ENCODE measurements at regions of chr13 and their contacts with region 1.

Region 1: DNA sequence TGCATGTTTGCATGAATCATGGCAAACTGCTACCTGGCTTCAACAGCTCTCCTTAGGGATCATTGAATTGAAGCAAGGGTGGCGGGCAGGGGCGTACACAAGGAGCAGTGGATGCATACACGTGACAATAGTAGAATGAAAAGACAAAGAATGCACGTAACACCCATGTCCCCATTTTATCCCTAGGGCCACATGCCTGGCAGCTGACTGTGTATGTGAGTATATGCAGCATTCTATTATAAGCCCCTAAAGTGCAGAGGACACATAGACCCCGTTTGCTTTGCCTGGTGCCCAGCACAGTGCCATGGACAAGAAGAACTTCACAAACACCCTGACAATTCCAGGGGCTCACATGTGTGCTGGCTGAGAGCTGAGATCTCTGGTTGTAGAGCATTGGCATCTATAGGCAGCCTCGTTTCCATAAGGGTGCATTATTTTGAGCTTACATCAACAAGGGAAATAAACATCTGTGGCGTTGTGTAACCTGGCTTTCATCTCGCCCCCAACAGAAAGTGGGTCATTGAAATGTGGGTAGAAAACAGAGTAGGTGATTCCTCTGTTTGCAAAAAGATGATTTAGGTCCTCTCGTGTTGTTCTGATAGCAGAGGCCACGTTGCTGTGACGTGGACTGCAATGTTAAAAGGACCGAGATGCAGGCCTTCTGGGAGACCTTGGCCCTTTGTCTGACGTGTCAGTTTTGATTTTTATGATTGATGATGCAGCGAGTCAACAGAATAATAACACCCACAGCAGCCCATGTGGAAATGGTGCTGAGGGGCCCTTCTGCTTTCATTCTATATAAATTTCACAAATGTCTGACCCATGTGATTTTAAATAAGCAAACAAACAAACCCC is 68.7 kb downstream of the FGF9 start:
- DNase-seq: no peak
- H3K4me3 ChIP-seq: no peak overlapping the region
- H3K4me3 Mint-ChIP-seq: no peak overlapping the region
- H3K27ac Mint-ChIP-seq: no peak overlapping the region
- H3K4me1 ChIP-seq: peaks cover 32% of the 10 kb centered on the region
- H3K4me1 Mint-ChIP-seq: no peaks in the 10 kb centered on the region
- H3K27me3 ChIP-seq: no peaks in the 10 kb centered on the region
- H3K27me3 Mint-ChIP-seq: no peaks in the 10 kb centered on the region
- CTCF ChIP-seq: no peak

Region 2: DNA sequence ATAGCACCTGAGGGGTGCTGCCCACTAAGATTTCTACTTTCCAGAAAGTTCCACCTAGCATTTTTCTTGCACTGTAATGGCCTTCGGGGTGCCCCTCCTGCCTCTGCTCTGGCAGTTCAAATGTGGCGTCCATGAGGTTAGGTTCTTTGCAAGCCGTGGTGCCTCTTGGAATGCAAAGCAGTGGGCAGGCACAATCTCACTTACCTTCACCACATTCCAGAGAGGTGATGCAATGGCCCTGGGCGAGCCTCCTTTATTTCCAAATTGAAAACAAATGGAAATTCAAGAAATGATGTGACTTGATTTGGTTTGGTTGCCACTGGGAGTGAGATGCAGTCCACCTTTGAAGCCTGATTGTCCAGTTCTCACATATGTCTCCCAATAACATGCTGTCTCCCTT is 21.7 kb before region 1 on chr13:
- CTCF ChIA-PET with region 1: no interaction called
- POLR2A ChIA-PET with region 1: no interaction called
- intact Hi-C with region 1: loop called (anchors 2 kb)
- DNase-seq: peak in 1 of 2 experiments; percentile 15
- H3K4me3 ChIP-seq: no peak overlapping the region
- H3K4me3 Mint-ChIP-seq: no peak overlapping the region
- H3K27ac Mint-ChIP-seq: peak overlapping the region; percentile 24
- H3K4me1 ChIP-seq: peaks cover 14% of the 10 kb centered on the region
- H3K4me1 Mint-ChIP-seq: peaks cover 22% of the 10 kb centered on the region
- H3K27me3 ChIP-seq: no peaks in the 10 kb centered on the region
- H3K27me3 Mint-ChIP-seq: no peaks in the 10 kb centered on the region
- CTCF ChIP-seq: no peak

Region 3: DNA sequence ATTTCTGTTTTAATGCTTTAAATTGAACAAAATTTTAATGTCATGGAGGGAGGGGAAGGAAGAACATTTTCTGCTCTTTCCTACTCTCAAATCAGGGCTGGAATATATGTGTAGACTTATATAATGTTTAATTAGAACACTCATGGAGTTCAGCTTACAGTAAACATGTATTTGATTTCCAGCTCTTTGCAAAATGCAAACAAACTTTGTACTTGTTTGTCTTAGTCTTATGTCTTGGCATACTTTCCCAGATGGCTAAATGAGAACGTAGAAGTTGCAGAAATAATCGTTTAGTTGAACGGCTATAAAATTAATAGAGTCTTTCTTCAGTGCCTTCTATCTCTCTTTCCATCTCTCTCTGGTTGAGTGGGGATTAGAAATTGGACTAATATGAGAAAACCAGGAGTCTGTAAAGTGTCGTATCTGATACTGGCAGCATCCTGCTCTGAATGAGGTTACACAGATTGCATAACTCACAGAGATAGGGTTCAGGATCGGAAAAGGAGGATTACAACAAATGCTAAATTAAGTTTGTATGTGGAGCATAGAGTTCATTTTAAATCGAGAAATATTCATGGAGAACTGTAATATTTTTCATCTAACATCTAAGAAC is 13.7 kb after region 1 on chr13:
- CTCF ChIA-PET with region 1: no interaction called
- POLR2A ChIA-PET with region 1: no interaction called
- intact Hi-C with region 1: loop called (anchors 1 kb)
- DNase-seq: no peak
- H3K4me3 ChIP-seq: no peak overlapping the region
- H3K4me3 Mint-ChIP-seq: no peak overlapping the region
- H3K27ac Mint-ChIP-seq: peak overlapping the region; percentile 39
- H3K4me1 ChIP-seq: peaks cover 34% of the 10 kb centered on the region
- H3K4me1 Mint-ChIP-seq: peaks cover 57% of the 10 kb centered on the region
- H3K27me3 ChIP-seq: no peaks in the 10 kb centered on the region
- H3K27me3 Mint-ChIP-seq: no peaks in the 10 kb centered on the region
- CTCF ChIP-seq: no peak

Region 4: DNA sequence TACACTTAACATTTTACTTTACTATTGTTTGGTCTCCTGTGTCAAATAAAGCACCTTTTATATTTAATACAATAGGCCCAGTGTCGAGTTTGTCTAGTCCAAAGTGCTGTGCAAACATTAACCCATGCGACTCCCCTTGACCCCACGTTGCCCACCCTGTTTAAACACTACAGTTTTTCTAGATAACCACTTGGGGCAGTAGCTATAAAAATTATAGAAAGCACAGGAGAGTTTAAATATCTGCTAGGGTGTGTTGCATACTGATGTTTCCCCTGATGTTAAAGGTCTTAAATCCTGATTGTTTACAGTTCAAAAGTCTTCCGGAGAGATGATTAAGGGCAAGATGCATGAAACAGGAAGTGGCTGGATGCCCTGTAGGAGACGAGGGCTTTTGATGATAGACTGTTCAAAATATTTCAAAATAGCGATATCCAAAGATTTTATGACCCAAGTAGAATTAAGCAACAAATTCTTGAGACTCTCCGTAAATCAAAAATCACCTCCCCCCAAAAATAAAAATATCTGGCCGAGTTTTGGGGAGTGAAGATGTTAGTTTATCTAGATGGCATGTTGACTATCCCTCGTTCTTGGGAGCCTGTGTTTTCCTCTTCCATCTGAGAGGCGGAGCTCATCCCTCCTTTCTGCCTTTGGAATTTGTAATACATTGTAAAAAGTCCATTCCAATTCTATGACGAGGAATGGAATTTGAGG is 98.5 kb after region 1 on chr13:
- CTCF ChIA-PET with region 1: no interaction called
- POLR2A ChIA-PET with region 1: no interaction called
- intact Hi-C with region 1: loop called (anchors 2 kb)
- DNase-seq: peak in 1 of 2 experiments; percentile 25
- H3K4me3 ChIP-seq: 0 out of 2 replicates have a peak overlapping the region, but pooled peaks have one; percentile 8
- H3K4me3 Mint-ChIP-seq: peak overlapping the region; percentile 87
- H3K27ac Mint-ChIP-seq: peak overlapping the region; percentile 96
- H3K4me1 ChIP-seq: peaks cover 27% of the 10 kb centered on the region
- H3K4me1 Mint-ChIP-seq: peaks cover 43% of the 10 kb centered on the region
- H3K27me3 ChIP-seq: no peaks in the 10 kb centered on the region
- H3K27me3 Mint-ChIP-seq: no peaks in the 10 kb centered on the region
- CTCF ChIP-seq: peak; percentile 26 to 35

Measured in Caco-2 (cell line).